CD8-positive, alpha-beta T cell (primary cell): ENCODE measurements at regions of chr19 and their contacts with region 1.

Region 1: GRCh38 chr19:58278157-58279041 is at the start of gene ZNF8:
- DNase-seq: peak; percentile 89 to 99 (median 97)
- ATAC-seq: peak; percentile 97
- H3K4me3 ChIP-seq: peak within 1 kb of the TSS; percentile 67 to 92
- H3K4me3 Mint-ChIP-seq: peak within 1 kb of the TSS; percentile 99
- H3K27ac ChIP-seq: peak within 1 kb of the TSS; percentile 72 to 85
- H3K27ac Mint-ChIP-seq: peak within 1 kb of the TSS; percentile 96
- H3K4me1 ChIP-seq: peaks cover 26% of the 10 kb centered on the region
- H3K4me1 Mint-ChIP-seq: peaks cover 50% of the 10 kb centered on the region
- H3K27me3 ChIP-seq: no peaks in the 10 kb centered on the region
- H3K27me3 Mint-ChIP-seq: no peaks in the 10 kb centered on the region
- CTCF ChIP-seq: no peak
- total RNA-seq, gene ZNF8: 9.2 to 9.5 TPM

Region 2: DNA sequence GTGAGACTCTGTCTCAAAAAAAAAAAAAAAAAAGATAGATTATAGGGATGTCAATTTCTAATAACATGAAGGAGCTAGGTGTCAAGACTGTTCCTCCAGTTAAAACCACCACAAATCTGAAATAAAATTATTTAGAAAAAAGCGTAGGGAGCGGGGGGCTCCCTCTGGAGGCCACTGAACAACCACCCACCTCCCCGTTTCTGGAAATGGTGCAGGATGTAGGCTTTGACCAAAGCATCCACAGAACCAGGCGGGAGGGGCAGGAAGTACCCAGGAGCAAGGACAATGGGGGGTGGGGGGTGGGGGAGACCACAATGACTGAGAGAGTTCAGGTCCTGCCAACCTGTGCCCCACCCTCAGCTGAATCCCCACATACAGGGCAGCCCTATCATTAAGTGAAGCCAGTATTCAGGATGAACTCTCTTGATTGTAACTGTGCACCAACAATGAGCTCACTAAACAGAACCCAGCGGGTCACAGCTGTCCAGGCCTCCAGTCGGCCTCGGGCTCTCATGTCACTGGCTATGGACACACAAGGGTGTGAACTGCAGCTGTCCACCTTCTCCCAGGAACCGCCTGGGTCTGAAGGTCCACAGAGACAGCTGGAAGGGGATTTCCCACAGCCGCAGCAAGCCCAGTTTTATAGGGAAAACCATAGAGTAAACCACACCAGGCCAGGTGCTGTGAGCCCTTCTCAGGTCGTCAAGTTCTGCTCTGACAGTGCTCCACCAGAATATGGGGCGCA is 187.0 kb before region 1 on chr19:
- CTCF ChIA-PET with region 1: no interaction called
- POLR2A ChIA-PET with region 1: no interaction called
- intact Hi-C with region 1: no loop called
- DNase-seq: no peak
- ATAC-seq: no peak
- H3K4me3 ChIP-seq: no peak overlapping the region
- H3K4me3 Mint-ChIP-seq: no peak overlapping the region
- H3K27ac ChIP-seq: no peak overlapping the region
- H3K27ac Mint-ChIP-seq: no peak overlapping the region
- H3K4me1 ChIP-seq: no peaks in the 10 kb centered on the region
- H3K4me1 Mint-ChIP-seq: peaks cover 3% of the 10 kb centered on the region
- H3K27me3 ChIP-seq: no peaks in the 10 kb centered on the region
- H3K27me3 Mint-ChIP-seq: no peaks in the 10 kb centered on the region
- CTCF ChIP-seq: no peak

Region 3: DNA sequence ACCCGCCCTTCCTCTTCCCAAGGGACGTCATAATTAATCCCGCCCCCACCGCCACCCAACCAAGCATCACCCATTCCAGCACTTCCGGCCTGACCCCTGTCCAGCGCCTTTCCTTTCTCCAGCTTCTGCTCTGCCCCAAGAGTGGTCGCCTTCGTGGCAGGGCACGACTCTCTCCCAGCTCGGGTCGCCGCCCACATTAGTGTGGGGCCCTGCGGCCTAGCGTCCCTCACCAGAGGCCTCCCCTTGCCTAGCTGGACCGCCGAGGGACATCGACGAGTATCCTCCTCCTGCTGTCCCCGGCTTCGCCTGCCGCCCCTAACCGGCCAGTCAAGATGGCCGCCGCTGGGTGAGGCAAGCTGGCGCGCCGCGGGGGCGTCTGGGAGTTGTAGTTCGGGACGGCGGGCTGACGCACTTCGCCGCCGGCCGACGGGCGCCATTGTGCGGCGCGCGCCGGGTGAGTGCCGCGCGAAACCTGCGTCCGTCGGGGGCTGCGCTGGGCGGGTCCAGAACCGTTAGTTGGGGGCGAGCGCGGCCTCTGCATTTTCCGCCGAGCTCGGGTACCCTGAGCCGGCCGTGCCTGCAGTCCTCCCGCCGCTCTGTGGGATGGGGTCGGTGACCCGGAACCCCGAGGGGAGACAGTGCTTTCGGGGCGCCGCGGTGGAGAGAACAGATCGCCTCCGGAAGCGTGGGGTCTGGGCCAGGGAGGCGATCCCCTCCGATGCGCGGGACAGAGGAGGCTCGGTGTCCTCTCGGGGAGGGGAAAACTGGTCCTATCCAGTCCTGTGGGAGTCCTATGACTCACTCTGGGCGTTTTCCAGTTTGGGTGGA is 95.2 kb before region 1 on chr19 and contains the start of gene ZNF274:
- CTCF ChIA-PET with region 1: no interaction called
- POLR2A ChIA-PET with region 1: interaction called, 12 read pairs
- intact Hi-C with region 1: loop called (anchors 1 kb)
- DNase-seq: peak; percentile 88 to 96 (median 94)
- ATAC-seq: peak; percentile 86
- H3K4me3 ChIP-seq: peak within 1 kb of the TSS; percentile 90 to 94
- H3K4me3 Mint-ChIP-seq: peak within 1 kb of the TSS; percentile 91
- H3K27ac ChIP-seq: peak within 1 kb of the TSS; percentile 99 to 100
- H3K27ac Mint-ChIP-seq: peak within 1 kb of the TSS; percentile 100
- H3K4me1 ChIP-seq: peaks cover 9% of the 10 kb centered on the region
- H3K4me1 Mint-ChIP-seq: peaks cover 22% of the 10 kb centered on the region
- H3K27me3 ChIP-seq: no peaks in the 10 kb centered on the region
- H3K27me3 Mint-ChIP-seq: no peaks in the 10 kb centered on the region
- CTCF ChIP-seq: no peak
- total RNA-seq, gene ZNF274: 52.7 to 58.9 TPM

Region 4: DNA sequence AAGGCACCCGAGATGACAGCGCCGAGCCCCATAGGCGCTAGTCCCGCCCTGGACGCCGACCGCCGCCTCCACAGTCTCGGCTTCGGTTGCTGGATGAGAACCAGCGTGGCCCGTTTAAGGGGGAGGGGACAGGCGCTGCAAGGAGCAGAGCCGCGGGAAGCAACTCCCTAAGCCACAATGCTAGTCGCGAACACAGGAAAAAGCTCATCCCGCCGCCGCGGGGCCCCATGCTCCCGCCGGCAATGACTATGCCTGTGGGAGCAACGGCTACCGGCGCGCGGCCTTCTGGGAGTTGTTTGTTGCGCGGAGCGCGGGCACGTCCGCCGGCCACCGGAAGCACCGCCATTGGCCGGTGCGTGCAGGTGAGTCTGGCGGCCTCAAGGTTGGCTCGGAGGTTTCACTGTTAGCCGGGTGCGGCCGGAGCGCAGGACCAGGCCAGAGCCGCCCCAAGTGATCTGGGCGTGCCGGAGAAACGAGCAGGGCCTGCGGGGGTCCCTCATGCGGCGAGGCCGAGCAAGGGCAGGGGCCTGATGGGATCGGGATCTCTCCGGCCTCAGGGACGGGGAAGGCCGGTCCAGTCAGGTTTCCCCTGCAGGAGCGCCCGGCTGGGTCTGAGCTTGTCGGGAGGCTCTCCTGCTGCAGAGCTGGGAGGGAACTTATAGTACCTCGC is 49.7 kb before region 1 on chr19 and contains the start of gene ZNF544:
- CTCF ChIA-PET with region 1: no interaction called
- POLR2A ChIA-PET with region 1: interaction called, 3 read pairs
- intact Hi-C with region 1: loop called in 1 of 2 experiments (anchors 2 kb)
- DNase-seq: peak in 8 of 9 experiments; percentile 35 to 78 (median 54)
- ATAC-seq: peak; percentile 71
- H3K4me3 ChIP-seq: peak within 1 kb of the TSS; percentile 72 to 93
- H3K4me3 Mint-ChIP-seq: peak within 1 kb of the TSS; percentile 93
- H3K27ac ChIP-seq: peak within 1 kb of the TSS; percentile 37 to 79
- H3K27ac Mint-ChIP-seq: peak within 1 kb of the TSS; percentile 85
- H3K4me1 ChIP-seq: peaks cover 13% of the 10 kb centered on the region
- H3K4me1 Mint-ChIP-seq: peaks cover 34% of the 10 kb centered on the region
- H3K27me3 ChIP-seq: no peaks in the 10 kb centered on the region
- H3K27me3 Mint-ChIP-seq: no peaks in the 10 kb centered on the region
- CTCF ChIP-seq: no peak
- total RNA-seq, gene ZNF544: 9.5 to 12.5 TPM

Region 5: GRCh38 chr19:58315580-58315979 is 37.2 kb after region 1 on chr19:
- CTCF ChIA-PET with region 1: no interaction called
- POLR2A ChIA-PET with region 1: no interaction called
- intact Hi-C with region 1: no loop called
- DNase-seq: no peak
- ATAC-seq: no peak
- H3K4me3 ChIP-seq: no peak overlapping the region
- H3K4me3 Mint-ChIP-seq: no peak overlapping the region
- H3K27ac ChIP-seq: no peak overlapping the region
- H3K27ac Mint-ChIP-seq: no peak overlapping the region
- H3K4me1 ChIP-seq: no peaks in the 10 kb centered on the region
- H3K4me1 Mint-ChIP-seq: no peaks in the 10 kb centered on the region
- H3K27me3 ChIP-seq: no peaks in the 10 kb centered on the region
- H3K27me3 Mint-ChIP-seq: no peaks in the 10 kb centered on the region
- CTCF ChIP-seq: no peak

Region 6: DNA sequence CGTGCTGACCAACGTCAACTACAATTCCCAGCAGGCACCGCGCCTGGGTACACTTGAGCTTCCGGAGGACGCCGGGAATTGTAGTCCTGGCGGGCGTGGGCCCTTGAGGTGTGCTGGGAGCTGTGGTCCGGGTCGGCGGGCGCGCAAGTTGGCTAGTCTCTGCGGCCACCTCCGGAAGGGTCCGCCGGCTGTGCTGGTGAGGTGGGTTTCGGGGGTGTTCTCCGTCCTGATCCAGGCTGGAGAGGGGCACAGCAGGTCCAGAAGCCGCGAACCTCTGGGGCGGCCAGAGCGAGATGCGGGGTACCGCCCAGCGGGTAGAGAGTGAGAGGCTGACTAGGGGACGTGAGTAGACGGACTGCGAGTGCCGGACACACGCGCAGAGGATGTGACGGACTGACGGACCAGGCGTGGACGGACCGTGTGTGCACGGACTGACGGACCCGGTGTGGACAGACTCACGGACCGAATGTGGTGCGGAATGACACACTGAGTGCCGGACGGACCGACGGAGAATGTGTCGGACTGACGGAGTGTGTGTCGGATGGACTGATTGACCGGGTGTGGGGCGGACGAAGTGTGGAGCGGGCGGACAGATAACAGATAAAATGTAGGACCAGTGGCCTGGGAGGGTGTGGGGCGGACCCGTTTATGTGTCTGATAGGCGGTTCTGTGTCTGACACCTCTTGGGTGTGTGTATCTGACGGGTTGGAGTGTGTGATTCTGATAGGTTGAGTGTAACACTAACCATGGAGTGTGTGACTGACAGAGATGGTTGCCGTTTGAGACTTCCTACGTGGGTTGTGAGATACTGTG is 48.7 kb after region 1 on chr19 and contains the start of gene ZSCAN22:
- CTCF ChIA-PET with region 1: no interaction called
- POLR2A ChIA-PET with region 1: interaction called, 6 read pairs
- intact Hi-C with region 1: loop called (anchors 1 to 2 kb)
- DNase-seq: peak; percentile 76 to 94 (median 89)
- ATAC-seq: peak; percentile 78
- H3K4me3 ChIP-seq: peak within 1 kb of the TSS; percentile 84 to 96
- H3K4me3 Mint-ChIP-seq: no peak within 1 kb of the TSS
- H3K27ac ChIP-seq: peak within 1 kb of the TSS; percentile 77 to 96
- H3K27ac Mint-ChIP-seq: no peak within 1 kb of the TSS
- H3K4me1 ChIP-seq: peaks cover 19% of the 10 kb centered on the region
- H3K4me1 Mint-ChIP-seq: peaks cover 3% of the 10 kb centered on the region
- H3K27me3 ChIP-seq: no peaks in the 10 kb centered on the region
- H3K27me3 Mint-ChIP-seq: no peaks in the 10 kb centered on the region
- CTCF ChIP-seq: no peak
- total RNA-seq, gene ZSCAN22: 1.7 to 2.2 TPM

Region 7: GRCh38 chr19:58572818-58573657 is 294.6 kb after region 1 on chr19 and contains the start of gene MZF1:
- CTCF ChIA-PET with region 1: no interaction called
- POLR2A ChIA-PET with region 1: no interaction called
- intact Hi-C with region 1: loop called in 1 of 2 experiments (anchors 1 kb)
- DNase-seq: peak; percentile 99 to 100 (median 99)
- ATAC-seq: peak; percentile 70
- H3K4me3 ChIP-seq: peak within 1 kb of the TSS; percentile 83 to 84
- H3K4me3 Mint-ChIP-seq: peak within 1 kb of the TSS; percentile 98
- H3K27ac ChIP-seq: peak within 1 kb of the TSS; percentile 98 to 100
- H3K27ac Mint-ChIP-seq: peak within 1 kb of the TSS; percentile 99
- H3K4me1 ChIP-seq: peaks cover 22% of the 10 kb centered on the region
- H3K4me1 Mint-ChIP-seq: peaks cover 30% of the 10 kb centered on the region
- H3K27me3 ChIP-seq: no peaks in the 10 kb centered on the region
- H3K27me3 Mint-ChIP-seq: no peaks in the 10 kb centered on the region
- CTCF ChIP-seq: no peak
- total RNA-seq, gene MZF1: 14.1 to 15.0 TPM